Cardiac septum (tissue), 1 donor: ENCODE measurements at regions of chr20 and their contacts with region 1.

Region 1: DNA sequence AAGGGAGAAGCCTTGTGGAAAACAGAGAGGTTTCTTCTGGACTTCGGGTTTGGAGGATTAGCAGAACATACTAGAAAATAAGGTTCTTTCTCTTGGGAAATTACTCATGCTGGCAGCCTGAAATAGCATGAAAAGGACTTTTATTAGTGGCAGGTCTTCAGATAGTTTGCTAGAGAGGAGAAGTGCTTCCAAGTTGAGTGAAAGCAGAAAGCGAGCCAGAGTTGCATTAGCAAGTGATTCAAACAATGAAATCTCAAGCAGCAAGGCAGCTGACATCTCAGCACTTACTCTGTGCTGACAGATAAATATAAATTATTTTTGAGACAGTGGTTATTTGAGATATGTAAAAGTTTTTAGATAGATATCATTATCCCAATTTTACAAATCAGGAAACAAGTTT is 91.9 kb downstream of the PLCB4 start:
- DNase-seq: no peak

Region 2: DNA sequence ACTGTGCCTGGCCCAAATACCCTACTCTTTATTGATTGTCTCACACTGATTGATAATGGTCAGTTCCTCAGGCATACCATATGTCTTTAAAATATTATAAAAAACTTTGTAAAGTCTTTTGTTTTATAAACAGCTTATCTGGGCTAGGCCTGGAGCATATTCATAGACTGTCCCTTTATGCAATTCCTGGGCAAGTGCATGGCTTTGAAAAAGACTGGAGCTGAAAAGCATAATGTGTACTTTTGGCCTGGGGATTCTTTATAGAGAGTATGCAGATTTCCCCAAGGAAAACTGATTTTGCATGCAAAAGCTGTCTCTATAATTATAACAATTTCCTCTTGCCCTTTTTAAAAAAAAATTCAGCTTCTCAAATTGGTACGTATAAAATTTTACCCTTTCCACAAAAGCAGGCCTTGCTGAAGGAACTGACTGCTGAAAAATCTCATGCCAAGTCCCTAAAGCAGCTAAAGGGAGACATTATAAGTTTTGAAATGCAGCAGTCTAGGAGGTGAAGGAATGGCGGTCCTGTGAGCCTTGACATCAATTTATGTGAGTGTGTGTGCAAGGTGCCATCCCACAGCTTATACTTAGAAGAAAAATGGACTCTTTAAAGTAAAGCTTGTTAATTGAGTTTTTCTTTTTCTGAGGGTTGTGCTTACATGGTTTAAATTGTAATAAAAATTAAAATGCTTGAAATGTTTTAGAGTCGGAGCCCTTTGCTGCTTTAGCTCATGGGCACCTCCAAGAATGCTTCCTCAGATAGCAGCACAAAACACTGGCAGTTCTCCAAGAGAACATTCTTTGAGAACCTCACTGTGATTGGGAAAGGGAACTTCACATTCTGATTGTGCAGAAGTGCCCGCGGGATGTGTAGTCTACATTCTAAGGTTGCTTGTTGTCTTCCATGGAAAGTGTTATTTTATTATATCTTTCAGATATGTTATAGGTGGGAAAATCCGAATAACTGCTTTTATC is 47.9 kb before region 1 on chr20:
- intact Hi-C with region 1: loop called (anchors 5 kb)
- DNase-seq: no peak